AG04449 (cell line): ENCODE measurements at regions of chr3 and their contacts with region 1.

Region 1: DNA sequence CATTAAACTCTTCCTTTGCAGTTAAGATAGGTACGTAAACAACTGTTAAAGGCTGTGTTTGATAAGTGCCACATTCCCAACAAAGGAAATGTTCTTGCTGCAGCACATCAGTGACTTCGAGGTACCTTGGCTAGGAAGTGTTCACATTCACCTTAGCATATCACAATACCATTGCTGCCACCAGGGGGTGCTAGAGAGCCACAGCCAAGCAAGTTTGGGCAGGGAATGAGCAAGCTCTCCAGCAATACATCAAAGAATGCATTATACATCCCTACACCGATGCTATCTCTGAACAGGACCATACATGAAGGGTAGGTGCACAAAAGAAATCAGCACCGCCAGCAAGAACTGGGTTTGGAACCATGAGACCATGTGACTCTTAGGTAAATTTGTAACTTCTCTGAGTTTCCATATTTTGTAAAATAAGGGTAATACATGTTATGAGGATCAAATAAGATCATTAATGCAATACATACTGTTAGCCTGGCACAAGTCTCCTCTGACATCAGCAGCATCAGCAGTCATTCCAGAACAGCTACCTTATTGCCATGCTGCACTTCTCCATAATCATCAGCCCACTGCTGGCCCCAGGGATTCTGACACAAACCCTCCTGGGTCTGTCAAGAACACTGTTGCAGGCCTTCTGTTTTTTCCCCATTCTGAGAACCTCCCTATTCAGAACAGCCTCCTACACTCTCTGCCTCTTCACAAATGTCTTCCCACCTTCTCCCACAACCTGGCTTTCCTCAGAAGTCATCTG is 37.6 kb downstream of the RYK start:
- DNase-seq: no peak
- H3K4me3 ChIP-seq: no peak overlapping the region
- CTCF ChIP-seq: peak; percentile 96

Region 2: DNA sequence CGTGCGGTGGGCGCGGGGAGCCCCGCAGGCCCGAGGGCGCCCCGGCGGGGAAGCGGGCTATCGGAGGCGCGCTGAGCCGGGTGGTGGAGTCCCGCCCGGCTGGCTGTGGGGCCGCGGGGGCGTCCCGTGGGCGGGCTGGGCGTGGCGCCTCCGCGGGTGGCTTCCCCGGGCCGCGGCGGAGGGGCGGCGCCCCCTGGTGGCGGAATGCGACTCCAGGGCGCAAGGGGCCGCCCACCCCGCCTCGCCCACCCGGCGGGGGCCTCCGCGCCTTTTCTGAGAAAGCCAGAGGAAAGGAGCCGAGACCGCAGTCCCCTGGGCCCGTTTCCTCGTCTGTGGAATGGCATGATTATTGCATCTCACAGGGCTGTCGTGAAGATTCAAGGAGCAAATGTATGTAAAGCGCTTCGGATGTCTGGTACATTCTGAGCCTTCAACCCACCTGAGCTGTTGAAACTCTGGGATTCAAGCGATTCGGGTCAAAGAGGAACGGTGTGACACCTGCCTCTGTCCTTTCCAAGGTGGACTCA is 285.5 kb before region 1 on chr3:
- CTCF ChIA-PET with region 1: interaction called, 139 read pairs
- POLR2A ChIA-PET with region 1: no interaction called
- DNase-seq: no peak
- H3K4me3 ChIP-seq: peak overlapping the region; percentile 52
- CTCF ChIP-seq: peak; percentile 72

Region 3: DNA sequence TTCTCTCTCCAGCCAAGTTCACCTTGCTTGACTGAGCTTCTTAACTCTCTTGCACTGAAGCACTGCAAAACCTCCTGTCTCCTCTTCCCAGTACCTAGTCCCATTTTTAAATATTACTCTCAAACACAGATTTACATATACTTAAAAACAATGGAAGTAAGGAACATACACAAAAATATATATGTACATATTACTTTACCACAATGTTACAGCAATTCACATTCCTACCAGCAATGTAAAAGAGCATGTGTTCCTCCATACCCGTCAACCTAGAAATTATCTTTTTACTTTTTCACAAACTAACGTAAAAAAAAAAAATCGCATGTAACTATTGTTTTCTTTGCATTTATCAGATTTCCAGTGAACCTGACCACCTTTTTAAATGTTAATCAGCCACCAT is 22.8 kb before region 1 on chr3:
- CTCF ChIA-PET with region 1: interaction called, 284 read pairs
- POLR2A ChIA-PET with region 1: no interaction called
- DNase-seq: no peak
- H3K4me3 ChIP-seq: no peak overlapping the region
- CTCF ChIP-seq: no peak

Region 4: DNA sequence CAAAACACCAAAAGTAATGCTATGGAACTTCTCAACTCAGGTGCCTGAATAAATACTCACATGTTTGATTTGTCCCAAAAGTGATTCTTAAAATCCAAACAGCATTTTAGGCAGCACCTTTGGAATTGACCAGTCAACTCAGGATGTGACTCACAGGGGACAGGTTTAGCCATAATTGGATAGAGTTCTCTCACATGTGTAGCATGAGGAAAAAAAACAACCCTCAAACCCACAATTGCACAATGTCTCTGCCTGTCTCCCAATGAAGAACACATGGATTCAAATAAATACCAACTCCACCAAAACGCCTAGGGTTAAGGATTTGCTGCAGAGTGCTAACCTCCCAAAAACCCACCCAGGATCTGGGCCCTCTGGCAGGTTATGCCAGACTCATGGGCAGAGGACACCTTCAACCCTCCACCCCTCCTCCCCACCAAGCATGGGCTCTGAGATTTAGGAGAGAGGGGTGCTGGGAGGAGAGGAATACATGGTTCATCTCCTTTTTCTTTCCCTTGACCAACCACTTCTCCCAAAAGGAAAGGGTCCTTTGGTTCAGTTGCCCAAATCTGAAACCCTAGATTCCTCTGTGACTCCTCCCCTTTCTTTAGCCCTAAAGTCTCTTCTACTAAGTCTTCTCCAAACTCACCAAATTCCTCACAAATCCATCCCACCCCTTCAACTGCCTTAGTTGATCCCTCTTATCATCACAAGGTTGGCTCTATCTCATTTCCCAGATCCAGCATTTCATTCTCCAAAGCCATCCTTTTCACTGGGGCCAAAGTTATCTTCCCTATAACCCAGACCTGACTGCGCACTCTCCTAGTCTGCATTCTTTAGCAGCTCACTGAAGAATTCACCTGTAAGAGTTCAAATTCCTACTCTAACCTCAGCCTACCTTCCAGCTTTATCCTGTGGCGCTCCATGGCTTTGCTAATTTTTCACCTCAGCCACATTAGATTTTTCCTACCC is 29.8 kb after region 1 on chr3:
- CTCF ChIA-PET with region 1: interaction called, 130 read pairs
- POLR2A ChIA-PET with region 1: no interaction called
- DNase-seq: peak; percentile 64
- H3K4me3 ChIP-seq: no peak overlapping the region
- CTCF ChIP-seq: no peak

Region 5: GRCh38 chr3:134282664-134283047 is 69.6 kb after region 1 on chr3:
- CTCF ChIA-PET with region 1: interaction called, 13 read pairs
- POLR2A ChIA-PET with region 1: no interaction called
- DNase-seq: no peak
- H3K4me3 ChIP-seq: no peak overlapping the region
- CTCF ChIP-seq: no peak

Region 6: GRCh38 chr3:134473868-134474546 is 260.9 kb after region 1 on chr3:
- CTCF ChIA-PET with region 1: interaction called, 68 read pairs
- POLR2A ChIA-PET with region 1: no interaction called
- DNase-seq: peak; percentile 56
- H3K4me3 ChIP-seq: no peak overlapping the region
- CTCF ChIP-seq: peak; percentile 45